ENCODE measurements at regions of chr12 and their contacts with region 1.

Region 1: DNA sequence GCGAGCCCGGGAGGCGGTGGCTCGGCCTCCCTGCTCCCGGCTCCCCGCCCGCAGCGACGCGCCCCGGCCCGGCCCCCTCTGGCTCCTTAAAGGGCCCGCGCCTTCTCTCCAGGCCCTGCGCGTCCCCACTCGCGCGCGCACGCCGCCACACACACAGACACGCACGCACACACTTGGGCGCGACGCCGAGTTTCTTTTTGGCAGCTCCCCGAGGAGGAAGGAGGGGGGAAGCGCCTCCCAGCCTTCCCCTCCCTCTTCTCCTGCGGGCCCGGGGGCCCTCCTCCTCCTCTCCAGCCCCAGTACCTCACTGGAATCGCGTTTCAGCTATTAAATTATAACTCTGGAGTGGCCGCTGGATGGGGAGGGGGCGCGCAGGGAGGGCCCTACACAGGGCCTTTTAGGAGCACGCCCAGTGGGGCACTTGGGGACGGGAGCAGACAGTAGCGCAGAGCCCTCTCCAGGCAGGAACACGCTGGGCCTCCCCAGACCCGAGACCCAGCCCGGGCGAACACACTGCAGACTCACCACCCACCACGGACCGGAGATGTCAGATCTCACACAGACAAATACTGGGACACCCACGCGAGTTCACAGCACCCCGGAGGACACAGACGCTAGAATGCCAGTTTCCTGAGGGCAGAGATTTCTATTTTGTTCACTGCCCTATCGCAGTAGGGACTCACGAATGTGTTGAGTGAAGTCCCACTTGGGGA is 405 bp upstream of the NCOR2 start:
- DNase-seq: peak in 1 of 2 experiments; percentile 75
- H3K4me3 ChIP-seq: peak overlapping the region; percentile 56
- H3K27ac ChIP-seq: no peak overlapping the region
- H3K4me1 ChIP-seq: peaks cover 10% of the 10 kb centered on the region
- H3K27me3 ChIP-seq: no peaks in the 10 kb centered on the region
- CTCF ChIP-seq: no peak

Region 2: DNA sequence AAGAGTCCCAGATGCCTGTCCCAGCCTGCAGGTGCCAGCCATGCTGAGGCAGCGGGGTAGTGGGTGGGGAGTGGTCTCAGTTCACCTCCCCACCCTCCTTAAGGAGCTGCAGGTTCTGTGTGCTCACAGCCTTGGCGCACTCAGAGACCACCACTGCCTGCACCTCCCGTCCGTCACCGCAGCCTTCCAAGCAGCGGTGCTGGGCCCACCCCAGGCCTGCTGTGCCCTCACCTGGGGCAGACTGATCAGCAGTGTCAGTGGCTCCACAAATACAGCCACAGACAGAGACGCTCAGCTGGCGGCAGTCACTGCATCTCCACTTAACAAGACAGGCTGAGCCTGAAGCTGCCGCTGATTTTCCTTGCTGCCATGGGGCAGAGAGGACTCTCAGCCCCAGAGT is 152.8 kb before region 1 on chr12:
- CTCF ChIA-PET with region 1: no interaction called
- POLR2A ChIA-PET with region 1: interaction called, 17 read pairs
- intact Hi-C with region 1: no loop called
- DNase-seq: no peak
- H3K4me3 ChIP-seq: no peak overlapping the region
- H3K27ac ChIP-seq: no peak overlapping the region
- H3K4me1 ChIP-seq: no peaks in the 10 kb centered on the region
- H3K27me3 ChIP-seq: no peaks in the 10 kb centered on the region
- CTCF ChIP-seq: no peak

Region 3: DNA sequence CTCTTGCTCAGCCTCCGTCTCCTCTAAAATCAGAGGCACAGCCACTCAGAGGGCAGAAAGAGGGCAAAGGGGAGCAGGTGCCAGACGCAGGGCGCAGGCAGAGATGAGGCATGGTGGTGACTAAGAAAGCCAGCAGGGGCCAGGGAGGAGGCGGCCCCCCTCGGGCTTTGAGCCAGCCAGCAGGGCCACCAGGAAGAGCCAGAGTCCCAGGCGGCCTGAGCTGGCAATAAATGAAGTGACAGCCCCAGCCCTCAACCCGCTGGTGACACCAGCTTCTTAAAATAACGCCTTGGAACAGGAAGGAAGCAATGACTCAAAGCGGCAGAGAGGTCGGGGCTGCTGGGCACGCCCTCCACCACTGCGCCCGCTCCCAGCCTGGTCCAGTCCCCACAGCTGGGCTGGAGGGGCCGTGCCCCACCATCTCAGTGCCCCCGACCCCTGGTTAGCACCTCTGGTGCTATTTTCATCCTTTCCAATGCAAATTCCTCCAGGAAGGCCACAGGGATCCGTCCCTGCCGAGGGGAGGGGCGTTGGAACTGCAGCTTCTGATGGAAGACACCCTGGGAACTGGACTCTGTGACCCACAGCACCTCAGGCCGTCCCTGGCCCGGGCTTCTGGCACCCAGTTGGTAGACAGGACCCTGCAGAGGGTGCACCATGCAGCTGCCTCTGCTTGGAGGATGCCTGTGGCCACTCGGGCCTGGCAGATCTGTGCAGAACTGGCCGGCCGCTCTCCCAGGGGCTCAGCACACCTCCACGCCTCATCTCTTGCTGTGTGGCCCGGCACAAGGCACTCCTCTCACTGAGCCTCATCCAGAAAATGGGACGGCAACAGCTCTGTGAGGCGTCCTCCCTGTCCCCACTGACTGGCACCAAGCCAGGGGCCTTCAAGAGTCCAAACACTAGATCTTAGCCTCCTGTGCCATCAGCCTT is 114.1 kb before region 1 on chr12:
- CTCF ChIA-PET with region 1: interaction called, 3 read pairs
- POLR2A ChIA-PET with region 1: no interaction called
- intact Hi-C with region 1: loop called (anchors 5 kb)
- DNase-seq: peak; percentile 96 to 97
- H3K4me3 ChIP-seq: peak overlapping the region; percentile 35; the same call in 1 of the 2 replicates
- H3K27ac ChIP-seq: peak overlapping the region; percentile 75
- H3K4me1 ChIP-seq: peaks cover 32% of the 10 kb centered on the region
- H3K27me3 ChIP-seq: no peaks in the 10 kb centered on the region
- CTCF ChIP-seq: no peak

Region 4: DNA sequence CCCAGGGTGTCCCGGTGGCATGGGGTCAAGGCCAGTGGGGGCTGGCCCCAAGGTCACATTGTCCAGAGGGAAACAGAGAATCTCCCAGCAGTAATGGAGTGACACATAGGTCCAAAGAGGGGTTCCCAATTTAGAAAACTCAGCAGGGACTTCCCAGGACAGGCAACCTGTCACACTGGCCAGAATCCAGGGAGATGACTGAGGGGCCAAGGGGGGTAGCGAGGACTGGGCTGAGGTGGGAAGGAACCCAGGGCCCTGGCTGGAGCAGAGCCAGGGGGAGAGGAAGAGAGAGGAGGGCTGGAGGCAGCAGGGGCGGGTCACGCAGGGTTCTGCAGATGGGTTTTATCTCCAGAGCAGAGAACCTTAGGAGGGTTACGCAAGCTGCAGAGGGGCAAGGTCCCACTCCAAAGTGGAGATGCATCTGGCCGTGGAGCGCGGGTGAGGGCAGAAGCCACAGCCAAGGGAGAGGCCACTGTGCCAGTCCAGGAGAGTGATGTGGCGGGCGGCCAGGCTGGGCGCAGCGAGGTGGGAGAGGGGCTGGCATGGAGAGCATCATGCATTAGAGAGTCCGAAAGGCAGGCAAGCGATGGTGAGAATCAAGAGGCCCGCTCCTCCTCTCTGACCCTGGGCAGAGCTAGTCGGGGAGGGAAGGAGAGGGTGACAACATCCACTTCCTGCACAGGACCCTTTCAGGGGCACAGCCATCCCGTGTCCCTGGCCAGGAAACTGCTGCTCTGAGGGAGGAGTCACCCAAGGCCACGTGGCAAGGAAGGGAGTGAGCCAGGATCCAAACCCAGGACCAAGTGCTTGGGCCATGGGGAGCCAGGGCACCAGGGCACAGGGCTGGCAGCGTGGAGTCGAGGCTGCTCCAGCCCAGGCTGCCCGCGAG is 29.4 kb before region 1 on chr12:
- CTCF ChIA-PET with region 1: interaction called, 18 read pairs
- POLR2A ChIA-PET with region 1: no interaction called
- intact Hi-C with region 1: no loop called
- DNase-seq: no peak
- H3K4me3 ChIP-seq: no peak overlapping the region
- H3K27ac ChIP-seq: no peak overlapping the region
- H3K4me1 ChIP-seq: peaks cover 41% of the 10 kb centered on the region
- H3K27me3 ChIP-seq: no peaks in the 10 kb centered on the region
- CTCF ChIP-seq: no peak

Region 5: DNA sequence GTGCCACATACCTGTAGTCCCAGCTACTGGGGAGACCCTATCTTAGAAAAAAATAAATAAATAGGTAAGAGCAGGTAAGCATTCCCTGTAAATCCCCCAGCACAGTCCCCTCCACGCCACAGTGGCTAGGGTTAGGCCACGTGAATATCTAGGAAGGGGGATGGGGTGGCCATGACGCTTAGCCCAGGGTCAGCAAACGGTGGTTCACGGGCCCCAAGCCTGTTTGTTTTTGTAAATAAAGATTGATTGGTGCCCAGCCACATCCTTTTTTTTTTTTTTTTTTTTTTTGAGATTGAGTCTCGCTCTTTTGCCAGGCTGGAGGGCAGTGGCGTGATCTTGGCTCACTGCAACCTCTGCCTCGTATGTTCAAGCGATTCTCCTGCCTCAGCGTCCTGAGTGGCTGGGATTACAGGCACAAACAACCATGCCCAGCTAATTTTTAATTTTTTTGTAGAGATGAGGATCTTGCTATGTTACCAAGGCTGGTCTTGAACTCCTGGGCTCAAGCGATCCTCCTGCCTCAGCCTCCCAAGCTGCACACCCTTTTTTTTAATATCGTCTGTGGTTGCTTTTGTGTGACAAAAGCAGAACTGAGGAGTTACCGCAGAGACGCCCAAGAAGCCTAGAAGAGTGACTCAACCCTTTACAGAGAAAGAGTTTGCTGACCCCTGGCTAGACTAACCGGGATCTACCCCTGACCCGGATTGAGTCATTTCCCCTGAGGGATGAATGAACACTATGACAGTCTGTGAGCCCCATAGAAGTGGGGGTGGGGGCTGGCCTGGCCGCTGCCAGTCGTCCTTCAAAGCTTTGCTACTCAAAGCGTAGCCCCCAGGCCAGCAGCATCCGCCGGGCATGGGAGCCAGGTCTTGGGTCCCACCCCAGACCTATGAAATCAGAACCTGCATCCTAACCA is 113.3 kb after region 1 on chr12:
- CTCF ChIA-PET with region 1: no interaction called
- POLR2A ChIA-PET with region 1: no interaction called
- intact Hi-C with region 1: loop called (anchors 1 kb)
- DNase-seq: peak; percentile 72 to 96
- H3K4me3 ChIP-seq: no peak overlapping the region; the same call in 1 of the 2 replicates
- H3K27ac ChIP-seq: peak overlapping the region; percentile 95
- H3K4me1 ChIP-seq: peaks cover 88% of the 10 kb centered on the region
- H3K27me3 ChIP-seq: no peaks in the 10 kb centered on the region
- CTCF ChIP-seq: peak; percentile 38

Region 6: DNA sequence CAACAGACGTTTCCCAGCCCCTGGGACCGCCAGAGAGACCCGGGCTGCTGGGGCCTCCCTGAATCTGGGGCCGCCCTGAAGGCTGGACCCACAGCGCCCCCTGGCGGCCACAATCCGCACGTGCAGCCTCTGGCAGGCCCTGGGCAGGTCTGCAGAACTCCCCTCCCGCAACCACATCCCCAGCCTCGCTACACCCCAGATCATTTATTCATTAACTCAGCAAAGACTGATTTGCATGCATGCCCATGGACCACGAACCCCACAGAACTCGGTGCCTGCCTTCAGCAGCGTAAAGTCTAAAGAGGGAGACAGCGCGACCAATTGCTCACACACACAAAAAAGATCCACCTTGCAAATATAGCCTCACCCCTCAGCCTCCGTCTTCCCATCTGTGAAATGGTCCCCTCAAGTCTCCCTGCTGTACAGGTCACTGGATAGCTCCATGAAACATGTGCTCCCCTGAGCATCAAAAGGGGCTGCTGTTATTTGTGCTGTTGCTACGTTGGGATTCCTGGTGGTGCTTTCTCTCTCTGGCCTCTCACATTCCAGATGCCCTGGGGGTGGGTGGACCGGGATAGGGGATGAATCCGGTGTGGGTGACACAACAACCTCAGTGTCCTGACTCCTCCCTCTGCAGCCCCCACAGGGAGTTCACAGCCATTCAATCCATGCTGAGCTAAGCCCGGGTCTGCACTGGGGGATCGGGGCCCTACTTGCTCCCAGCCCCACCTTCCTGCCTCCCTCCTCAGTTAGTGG is 199.4 kb after region 1 on chr12:
- CTCF ChIA-PET with region 1: interaction called, 5 read pairs
- POLR2A ChIA-PET with region 1: no interaction called
- intact Hi-C with region 1: loop called (anchors 1 kb)
- DNase-seq: peak in 1 of 2 experiments; percentile 71
- H3K4me3 ChIP-seq: no peak overlapping the region
- H3K27ac ChIP-seq: no peak overlapping the region
- H3K4me1 ChIP-seq: peaks cover 25% of the 10 kb centered on the region
- H3K27me3 ChIP-seq: no peaks in the 10 kb centered on the region
- CTCF ChIP-seq: peak; percentile 99

Region 7: DNA sequence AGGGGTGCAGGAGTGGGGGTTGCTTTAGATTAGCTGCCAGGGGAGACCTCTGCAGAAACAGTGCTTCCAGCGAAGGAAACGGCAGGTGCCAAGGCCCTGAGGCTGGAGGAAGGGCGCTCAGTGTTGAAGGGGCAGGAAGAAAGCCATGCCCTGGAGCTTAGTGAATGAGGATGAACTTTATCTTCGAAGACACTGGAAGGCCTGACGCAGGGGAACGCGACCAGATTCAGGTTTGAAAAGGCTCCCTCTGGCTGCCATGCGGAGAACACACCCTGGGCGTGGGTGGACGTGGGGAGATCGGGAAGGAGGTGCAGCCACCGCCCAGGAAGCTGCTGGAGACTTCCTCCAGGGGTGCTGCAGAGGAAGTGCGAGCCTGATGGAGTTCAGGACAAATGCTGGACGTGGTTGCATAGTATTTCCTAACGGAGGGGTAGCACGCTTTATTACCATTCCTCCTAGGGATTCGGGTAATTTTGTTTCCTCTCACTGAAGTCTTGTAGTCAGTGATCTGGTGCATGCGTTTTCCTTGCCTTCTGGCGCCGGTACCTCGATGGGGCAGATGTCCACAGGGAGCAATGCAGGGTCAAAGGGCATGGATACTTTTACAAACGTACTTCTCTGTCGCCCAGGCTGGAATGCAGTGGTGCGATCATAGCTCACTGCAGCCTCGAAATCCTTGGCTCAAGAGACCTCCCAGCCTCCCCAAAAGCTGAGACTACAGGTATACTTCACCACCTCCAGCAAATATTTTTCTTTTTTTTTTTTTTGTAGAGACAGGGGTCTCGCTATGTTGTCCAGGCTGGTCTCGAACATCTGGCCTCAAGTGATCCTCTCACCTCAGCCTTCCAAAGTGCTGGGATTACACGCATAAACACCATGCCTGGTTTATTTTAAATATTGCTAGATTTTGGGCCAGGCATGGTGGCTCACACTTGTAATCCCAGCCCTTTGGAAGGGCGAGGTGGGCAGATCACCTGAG is 373.0 kb after region 1 on chr12:
- CTCF ChIA-PET with region 1: no interaction called
- POLR2A ChIA-PET with region 1: no interaction called
- intact Hi-C with region 1: no loop called
- DNase-seq: peak; percentile 86 to 88
- H3K4me3 ChIP-seq: peak overlapping the region; percentile 67; the same call in 1 of the 2 replicates
- H3K27ac ChIP-seq: peak overlapping the region; percentile 86
- H3K4me1 ChIP-seq: peaks cover 23% of the 10 kb centered on the region
- H3K27me3 ChIP-seq: no peaks in the 10 kb centered on the region
- CTCF ChIP-seq: peak; percentile 76